Activated CD8-positive, alpha-beta T cell treated with anti-CD3 and anti-CD28 coated beads, Interleukin-2, amount 10 ng/mL, durations not matched to agents 7 days and 5 days (primary cell): ENCODE measurements at regions of chr20 and their contacts with region 1.

Region 1: GRCh38 chr20:58839474-58839874 is 11.2 kb downstream of the GNAS-AS1 start:
- DNase-seq: peak; percentile 61
- ATAC-seq: peak; percentile 71
- H3K4me3 Mint-ChIP-seq: no peak overlapping the region
- H3K27ac Mint-ChIP-seq: no peak overlapping the region
- H3K4me1 Mint-ChIP-seq: peaks cover 52% of the 10 kb centered on the region
- H3K27me3 Mint-ChIP-seq: peaks cover 67% of the 10 kb centered on the region

Region 2: GRCh38 chr20:58481481-58482021 is 357.9 kb before region 1 on chr20:
- CTCF ChIA-PET with region 1: interaction called, 17 read pairs
- POLR2A ChIA-PET with region 1: no interaction called
- DNase-seq: peak; percentile 54
- ATAC-seq: peak; percentile 53
- H3K4me3 Mint-ChIP-seq: no peak overlapping the region
- H3K27ac Mint-ChIP-seq: no peak overlapping the region
- H3K4me1 Mint-ChIP-seq: peaks cover 4% of the 10 kb centered on the region
- H3K27me3 Mint-ChIP-seq: peaks cover 17% of the 10 kb centered on the region

Region 3: DNA sequence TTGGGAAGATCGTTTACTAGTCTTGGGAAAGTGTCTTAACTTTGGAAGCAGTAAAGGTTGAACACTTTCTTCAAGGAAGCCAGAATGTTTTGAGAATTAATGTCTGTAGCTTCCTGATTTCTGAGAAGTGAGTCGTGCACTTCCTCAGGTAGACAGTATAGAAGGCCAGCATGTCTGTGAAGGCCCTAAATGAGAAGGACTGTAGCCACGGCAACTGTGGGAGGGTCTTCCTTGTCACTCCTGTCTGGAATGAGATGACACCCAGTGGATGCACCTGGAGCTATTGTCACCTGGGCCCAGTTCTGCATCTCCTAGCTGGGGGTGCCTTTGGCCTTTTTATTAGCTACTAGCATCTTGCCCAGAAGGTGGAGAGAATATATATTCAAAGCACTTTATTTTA is 179.6 kb before region 1 on chr20:
- CTCF ChIA-PET with region 1: interaction called, 14 read pairs
- POLR2A ChIA-PET with region 1: no interaction called
- DNase-seq: peak; percentile 43
- ATAC-seq: peak; percentile 46
- H3K4me3 Mint-ChIP-seq: peak overlapping the region; percentile 76
- H3K27ac Mint-ChIP-seq: peak overlapping the region; percentile 90
- H3K4me1 Mint-ChIP-seq: peaks cover 86% of the 10 kb centered on the region
- H3K27me3 Mint-ChIP-seq: no peaks in the 10 kb centered on the region

Region 4: GRCh38 chr20:58760856-58761255 is 78.6 kb before region 1 on chr20:
- CTCF ChIA-PET with region 1: no interaction called
- POLR2A ChIA-PET with region 1: no interaction called
- DNase-seq: no peak
- ATAC-seq: no peak
- H3K4me3 Mint-ChIP-seq: no peak overlapping the region
- H3K27ac Mint-ChIP-seq: no peak overlapping the region
- H3K4me1 Mint-ChIP-seq: peaks cover 8% of the 10 kb centered on the region
- H3K27me3 Mint-ChIP-seq: peaks cover 45% of the 10 kb centered on the region

Region 5: GRCh38 chr20:58824843-58825242 is 14.6 kb before region 1 on chr20:
- CTCF ChIA-PET with region 1: no interaction called
- POLR2A ChIA-PET with region 1: no interaction called
- DNase-seq: no peak
- ATAC-seq: no peak
- H3K4me3 Mint-ChIP-seq: no peak overlapping the region
- H3K27ac Mint-ChIP-seq: no peak overlapping the region
- H3K4me1 Mint-ChIP-seq: no peaks in the 10 kb centered on the region
- H3K27me3 Mint-ChIP-seq: peaks cover 24% of the 10 kb centered on the region

Region 6: GRCh38 chr20:59042796-59043660 is 203.6 kb after region 1 on chr20:
- CTCF ChIA-PET with region 1: no interaction called
- POLR2A ChIA-PET with region 1: no interaction called
- DNase-seq: peak; percentile 95
- ATAC-seq: peak; percentile 97
- H3K4me3 Mint-ChIP-seq: peak overlapping the region; percentile 91
- H3K27ac Mint-ChIP-seq: peak overlapping the region; percentile 96
- H3K4me1 Mint-ChIP-seq: peaks cover 50% of the 10 kb centered on the region
- H3K27me3 Mint-ChIP-seq: no peaks in the 10 kb centered on the region

Region 7: GRCh38 chr20:59232618-59233017 is 393.1 kb after region 1 on chr20:
- CTCF ChIA-PET with region 1: no interaction called
- POLR2A ChIA-PET with region 1: no interaction called
- DNase-seq: no peak
- ATAC-seq: no peak
- H3K4me3 Mint-ChIP-seq: no peak overlapping the region
- H3K27ac Mint-ChIP-seq: no peak overlapping the region
- H3K4me1 Mint-ChIP-seq: peaks cover 21% of the 10 kb centered on the region
- H3K27me3 Mint-ChIP-seq: no peaks in the 10 kb centered on the region